Endothelial cell of umbilical vein (primary cell): ENCODE measurements at regions of chrX and their contacts with region 1.

Region 1: DNA sequence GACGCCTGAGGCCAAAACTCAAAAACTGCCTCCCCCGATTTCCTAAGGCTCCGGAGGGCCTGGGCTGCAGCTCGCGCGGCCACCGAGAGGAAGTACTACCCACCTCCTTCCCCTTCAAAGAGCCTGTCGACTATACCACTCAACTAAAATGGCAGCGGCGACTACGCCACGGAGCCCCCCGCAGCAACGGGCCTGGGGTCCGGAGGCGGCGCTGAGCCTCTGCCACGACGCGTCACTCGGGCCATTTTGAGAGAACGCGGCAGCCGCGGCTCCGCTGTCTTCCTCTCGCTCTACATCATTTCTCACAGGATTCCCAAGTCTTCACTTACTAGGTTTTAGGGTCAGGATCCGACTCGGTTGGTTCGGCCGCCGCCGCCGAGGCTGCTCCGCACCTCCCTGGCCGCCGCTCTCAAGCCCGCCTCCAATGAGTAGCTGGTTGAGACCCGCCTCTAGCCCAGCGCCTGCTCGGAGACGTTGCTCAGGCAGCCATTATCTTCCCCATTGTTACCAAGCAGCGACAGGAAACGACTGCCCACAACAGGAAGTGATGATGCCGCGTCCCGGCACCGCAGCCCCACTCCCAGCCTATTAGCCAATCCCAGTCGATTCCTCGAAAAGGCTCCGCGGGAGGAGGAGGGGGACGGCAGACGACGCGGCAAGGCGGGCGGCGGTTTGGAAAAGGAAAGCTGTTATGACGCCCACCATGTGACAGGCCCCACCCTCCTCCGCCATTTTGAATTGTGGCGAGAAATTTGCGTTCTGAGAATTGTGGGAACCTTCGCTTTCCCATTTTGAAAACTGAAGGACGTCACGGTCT is at the start of gene RLIM:
- DNase-seq: peak; percentile 96
- H3K4me3 ChIP-seq: peak within 1 kb of the TSS; percentile 73 to 99 (median 87)
- H3K27ac ChIP-seq: peak within 1 kb of the TSS; percentile 99
- H3K4me1 ChIP-seq: peaks cover 15% of the 10 kb centered on the region
- H3K27me3 ChIP-seq: no peaks in the 10 kb centered on the region
- CTCF ChIP-seq: no peak
- POLR2A ChIP-seq: peak; percentile 54
- total RNA-seq, gene RLIM: 40.1 and 41.7 TPM in 2 replicates

Region 2: DNA sequence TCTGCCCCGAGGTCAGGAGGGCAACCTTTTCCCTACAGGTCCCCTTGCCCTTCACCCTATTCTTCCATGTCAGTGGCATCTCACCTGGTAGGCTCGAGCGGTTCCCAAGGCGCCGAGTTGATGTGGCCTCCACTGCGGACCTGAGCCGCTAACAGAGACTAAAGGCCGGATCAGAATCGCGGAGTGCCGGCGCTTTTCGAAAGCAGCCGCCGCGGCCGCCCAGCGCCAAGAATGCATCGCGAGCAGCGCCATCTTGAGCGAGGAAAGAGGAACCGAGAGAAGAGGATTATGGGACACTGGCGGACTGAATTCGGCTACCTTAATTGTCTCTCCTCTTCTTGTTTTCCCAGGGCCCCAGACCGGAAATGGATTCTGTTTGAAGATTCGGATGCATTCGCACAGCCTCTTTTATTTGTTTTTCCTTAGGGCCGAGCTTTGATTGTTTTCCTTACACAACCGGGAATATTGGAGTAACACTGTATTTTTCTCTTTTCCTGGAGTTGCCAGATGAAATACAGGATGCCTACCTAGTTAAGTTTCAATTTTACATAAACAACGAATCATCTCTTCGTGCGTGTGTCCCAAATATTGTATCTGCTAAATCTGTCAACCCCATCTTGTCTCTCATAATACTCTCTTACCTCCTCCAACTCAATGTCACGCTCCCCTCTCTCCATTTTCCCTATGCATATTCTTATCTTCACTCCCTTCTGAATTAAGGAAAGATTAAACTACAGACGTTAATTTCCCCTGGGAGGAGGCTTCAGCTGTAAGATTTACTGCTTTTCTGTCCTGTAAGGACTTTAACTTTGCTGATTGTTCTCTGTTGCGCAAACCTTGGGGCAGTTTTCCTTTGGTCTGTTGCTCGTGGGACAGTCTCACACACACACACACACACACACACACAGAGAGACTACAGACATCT is 542.0 kb after region 1 on chrX and contains the start of gene ABCB7:
- CTCF ChIA-PET with region 1: no interaction called
- POLR2A ChIA-PET with region 1: interaction called, 3 read pairs
- dilution Hi-C with region 1: no loop called
- intact Hi-C with region 1: loop called (anchors 1 kb)
- DNase-seq: peak; percentile 63
- H3K4me3 ChIP-seq: peak within 1 kb of the TSS; percentile 53 to 83 (median 66)
- H3K27ac ChIP-seq: peak within 1 kb of the TSS; percentile 60
- H3K4me1 ChIP-seq: peaks cover 4% of the 10 kb centered on the region
- H3K27me3 ChIP-seq: no peaks in the 10 kb centered on the region
- CTCF ChIP-seq: peak in 1 of 2 donors; percentile 11
- POLR2A ChIP-seq: peak; percentile 48
- total RNA-seq, gene ABCB7: 20.7 and 22.0 TPM in 2 replicates

Region 3: GRCh38 chrX:75603833-75604232 is 989.5 kb after region 1 on chrX:
- CTCF ChIA-PET with region 1: no interaction called
- POLR2A ChIA-PET with region 1: no interaction called
- dilution Hi-C with region 1: no loop called
- intact Hi-C with region 1: loop called (anchors 10 kb)
- DNase-seq: peak; percentile 4
- H3K4me3 ChIP-seq: no peak overlapping the region
- H3K27ac ChIP-seq: no peak overlapping the region
- H3K4me1 ChIP-seq: no peaks in the 10 kb centered on the region
- H3K27me3 ChIP-seq: no peaks in the 10 kb centered on the region
- CTCF ChIP-seq: peak; percentile 26
- POLR2A ChIP-seq: no peak